ENCODE measurements at regions of chr17 and their contacts with region 1.

Region 1: GRCh38 chr17:14300575-14301278 is at the start of gene HS3ST3B1:
- DNase-seq: peak; percentile 100
- ATAC-seq: peak; percentile 92
- H3K4me3 Mint-ChIP-seq: peak within 1 kb of the TSS; percentile 81
- H3K27ac Mint-ChIP-seq: peak within 1 kb of the TSS; percentile 90
- H3K4me1 Mint-ChIP-seq: peaks cover 54% of the 10 kb centered on the region
- H3K27me3 Mint-ChIP-seq: peaks cover 30% of the 10 kb centered on the region
- total RNA-seq, gene HS3ST3B1: 5.0 to 5.7 TPM

Region 2: GRCh38 chr17:13337864-13338371 is 962.8 kb before region 1 on chr17:
- CTCF ChIA-PET with region 1: no interaction called
- POLR2A ChIA-PET with region 1: no interaction called
- intact Hi-C with region 1: loop called in 1 of 2 experiments (anchors 2 kb)
- DNase-seq: peak; percentile 26
- ATAC-seq: no peak
- H3K4me3 Mint-ChIP-seq: no peak overlapping the region
- H3K27ac Mint-ChIP-seq: no peak overlapping the region
- H3K4me1 Mint-ChIP-seq: peaks cover 3% of the 10 kb centered on the region
- H3K27me3 Mint-ChIP-seq: peaks cover 20% of the 10 kb centered on the region

Region 3: DNA sequence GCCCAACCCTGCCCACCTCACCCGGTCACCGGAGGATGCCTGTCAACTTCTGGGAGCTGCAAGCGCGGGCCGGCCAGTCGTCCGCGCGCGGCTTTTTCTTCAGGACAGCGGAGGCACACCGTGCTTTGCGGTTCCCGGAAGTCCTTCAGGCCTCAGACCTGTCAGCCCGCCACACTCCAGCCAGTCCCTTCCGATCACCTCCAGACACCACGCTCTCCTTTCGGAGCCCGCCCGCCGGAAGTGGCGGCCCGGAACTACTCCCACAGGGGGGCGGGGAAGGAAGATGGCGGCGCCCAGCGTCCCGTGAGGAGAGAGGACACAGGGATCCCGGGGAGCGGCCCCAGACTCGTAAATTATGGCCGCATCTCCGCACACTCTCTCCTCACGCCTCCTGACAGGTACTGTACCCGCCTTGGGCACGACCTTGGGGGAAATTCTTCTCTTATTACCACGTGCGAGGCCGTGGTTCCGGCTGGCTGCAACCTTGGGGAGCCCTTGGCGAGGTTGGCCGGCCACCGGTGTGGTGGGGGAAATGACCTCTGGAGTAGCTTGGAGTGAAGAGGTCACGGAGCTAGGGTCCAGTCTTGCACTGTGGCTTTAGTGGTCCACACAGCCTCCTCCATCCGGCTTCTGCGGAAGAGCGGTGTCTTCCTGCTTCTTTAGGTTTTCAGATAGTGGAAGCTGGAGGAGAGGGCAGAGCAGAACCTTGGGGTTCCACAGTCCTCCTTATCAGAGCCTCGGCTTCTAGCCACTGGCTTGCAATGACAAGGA is 231.3 kb before region 1 on chr17 and contains the start of gene COX10:
- CTCF ChIA-PET with region 1: interaction called, 5 read pairs
- POLR2A ChIA-PET with region 1: no interaction called
- intact Hi-C with region 1: loop called (anchors 1 kb)
- DNase-seq: peak; percentile 91
- ATAC-seq: peak; percentile 93
- H3K4me3 Mint-ChIP-seq: peak within 1 kb of the TSS; percentile 94
- H3K27ac Mint-ChIP-seq: peak within 1 kb of the TSS; percentile 94
- H3K4me1 Mint-ChIP-seq: peaks cover 54% of the 10 kb centered on the region
- H3K27me3 Mint-ChIP-seq: no peaks in the 10 kb centered on the region
- total RNA-seq, gene COX10: 22.0 to 32.5 TPM

Region 4: GRCh38 chr17:14211801-14212200 is 88.9 kb before region 1 on chr17:
- CTCF ChIA-PET with region 1: interaction called, 3 read pairs
- POLR2A ChIA-PET with region 1: interaction called, 3 read pairs
- intact Hi-C with region 1: loop called in 1 of 2 experiments (anchors 5 kb)
- DNase-seq: peak; percentile 61
- ATAC-seq: peak; percentile 39
- H3K4me3 Mint-ChIP-seq: no peak overlapping the region
- H3K27ac Mint-ChIP-seq: no peak overlapping the region
- H3K4me1 Mint-ChIP-seq: peaks cover 13% of the 10 kb centered on the region
- H3K27me3 Mint-ChIP-seq: no peaks in the 10 kb centered on the region

Region 5: DNA sequence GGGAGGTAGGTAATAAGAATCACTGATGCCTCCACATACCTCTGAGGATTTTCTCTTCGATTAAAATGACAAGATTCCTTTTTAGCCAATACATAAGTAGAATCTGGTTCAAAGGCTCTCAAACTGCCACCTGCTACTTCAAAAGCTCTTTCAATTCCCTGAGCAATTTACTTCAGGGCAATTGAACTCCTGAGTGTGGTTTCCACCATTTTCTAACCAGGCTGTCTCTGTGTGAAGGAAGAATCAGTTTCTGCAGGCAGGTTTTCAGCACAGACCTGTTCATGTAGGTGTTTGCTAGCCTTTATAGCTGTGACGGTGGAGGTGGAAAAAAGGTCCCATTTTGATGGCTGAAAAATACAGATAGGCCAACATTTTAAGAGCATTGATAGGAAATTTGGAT is 18.0 kb before region 1 on chr17:
- CTCF ChIA-PET with region 1: no interaction called
- POLR2A ChIA-PET with region 1: no interaction called
- intact Hi-C with region 1: no loop called
- DNase-seq: no peak
- ATAC-seq: no peak
- H3K4me3 Mint-ChIP-seq: no peak overlapping the region
- H3K27ac Mint-ChIP-seq: no peak overlapping the region
- H3K4me1 Mint-ChIP-seq: no peaks in the 10 kb centered on the region
- H3K27me3 Mint-ChIP-seq: peaks cover 14% of the 10 kb centered on the region

Region 6: DNA sequence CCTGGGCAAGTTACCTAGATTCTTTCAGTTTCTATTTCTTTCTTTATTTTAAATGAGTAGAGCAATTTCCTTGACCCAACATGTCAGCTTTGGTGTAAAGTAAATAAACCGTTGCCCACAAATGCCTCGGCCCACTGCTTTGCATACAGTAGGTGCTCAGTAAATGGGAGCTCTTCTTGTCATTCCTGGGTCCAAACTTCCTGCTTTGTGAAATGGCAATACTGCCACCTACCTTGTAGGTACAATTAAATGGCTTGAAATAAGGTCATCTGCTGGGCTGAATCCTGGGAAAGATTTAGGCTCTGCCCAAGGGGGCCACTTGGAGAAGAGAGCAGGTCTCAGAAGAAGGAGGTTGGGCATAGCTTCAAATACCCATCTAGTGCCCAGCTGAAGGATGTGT is 253.1 kb after region 1 on chr17:
- CTCF ChIA-PET with region 1: no interaction called
- POLR2A ChIA-PET with region 1: no interaction called
- intact Hi-C with region 1: loop called in 1 of 2 experiments (anchors 5 kb)
- DNase-seq: no peak
- ATAC-seq: no peak
- H3K4me3 Mint-ChIP-seq: no peak overlapping the region
- H3K27ac Mint-ChIP-seq: no peak overlapping the region
- H3K4me1 Mint-ChIP-seq: peaks cover 3% of the 10 kb centered on the region
- H3K27me3 Mint-ChIP-seq: no peaks in the 10 kb centered on the region